Head of caudate nucleus (tissue), 42 donors: ENCODE measurements at regions of chr9 and their contacts with region 1.

Region 1: GRCh38 chr9:114155263-114155972 is at the start of gene COL27A1:
- DNase-seq: peak; percentile 49 to 93 (median 84)

Region 2: DNA sequence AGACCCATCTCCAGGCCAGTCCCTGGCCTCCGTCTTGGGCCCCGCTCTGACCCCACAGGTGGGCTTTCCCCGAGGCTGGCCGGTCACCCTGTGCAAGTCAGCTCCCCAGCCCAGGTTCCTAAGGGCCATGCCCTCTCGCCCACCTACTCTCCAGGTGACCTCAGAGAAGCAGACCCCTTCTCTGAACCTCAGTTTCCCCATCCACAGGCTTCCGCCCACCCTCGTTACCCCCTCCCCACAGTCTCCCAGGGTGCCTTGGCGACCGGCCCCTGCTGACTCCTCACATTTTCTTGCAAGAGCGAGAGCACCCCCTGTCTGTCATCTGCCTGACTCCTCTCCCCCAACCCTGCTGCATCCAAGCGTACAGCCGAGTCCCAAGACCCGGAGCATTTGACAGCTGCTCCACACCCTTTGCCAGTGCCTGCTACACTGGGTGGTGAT is 116.2 kb after region 1 on chr9:
- intact Hi-C with region 1: loop called (anchors 2 kb)
- DNase-seq: peak in 38 of 42 donors; percentile 24 to 84 (median 55)